Right ventricle myocardium superior (tissue), 1 donor: ENCODE measurements at regions of chr14 and their contacts with region 1.

Region 1: DNA sequence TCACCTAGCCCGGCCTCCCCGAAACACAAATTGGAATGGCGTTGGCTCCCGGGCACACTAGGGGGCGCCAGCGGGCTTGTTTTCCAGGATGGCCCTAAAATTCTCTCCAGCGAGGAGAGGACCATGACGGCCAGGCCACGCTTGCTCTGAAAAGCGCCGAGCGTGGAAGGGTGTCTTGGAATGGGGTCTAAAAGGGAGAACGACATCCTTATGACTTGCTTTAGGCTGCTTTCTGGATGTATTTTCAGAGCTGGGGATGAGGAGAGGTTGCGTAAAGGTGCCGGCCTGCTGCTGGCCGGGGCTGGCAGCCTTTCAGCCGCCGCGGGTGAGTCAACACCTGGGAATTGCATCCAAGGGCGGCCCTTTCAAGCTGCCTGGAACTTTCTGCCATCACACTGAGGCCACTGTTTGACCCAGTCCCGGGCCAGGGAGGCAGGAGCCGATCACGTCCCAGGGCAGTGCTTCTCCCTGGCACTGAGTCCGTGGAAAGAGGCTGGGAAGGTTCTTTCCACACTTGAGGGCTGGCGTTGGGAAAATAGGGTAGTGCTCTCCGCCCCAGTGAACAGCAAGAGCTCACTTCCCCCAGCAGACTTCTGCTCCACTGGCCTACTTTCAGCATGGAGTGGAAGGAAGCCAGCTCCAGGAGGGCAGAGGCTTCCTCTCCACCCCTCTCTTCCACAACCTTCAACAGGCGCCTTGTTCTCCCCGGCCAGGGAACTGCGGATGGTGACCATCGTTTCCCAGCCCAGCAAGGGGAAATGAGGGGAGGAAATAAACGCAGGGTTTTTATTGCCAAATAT is 216.2 kb downstream of the TTC8 start:
- DNase-seq: peak; percentile 92
- ATAC-seq: peak; percentile 96

Region 2: DNA sequence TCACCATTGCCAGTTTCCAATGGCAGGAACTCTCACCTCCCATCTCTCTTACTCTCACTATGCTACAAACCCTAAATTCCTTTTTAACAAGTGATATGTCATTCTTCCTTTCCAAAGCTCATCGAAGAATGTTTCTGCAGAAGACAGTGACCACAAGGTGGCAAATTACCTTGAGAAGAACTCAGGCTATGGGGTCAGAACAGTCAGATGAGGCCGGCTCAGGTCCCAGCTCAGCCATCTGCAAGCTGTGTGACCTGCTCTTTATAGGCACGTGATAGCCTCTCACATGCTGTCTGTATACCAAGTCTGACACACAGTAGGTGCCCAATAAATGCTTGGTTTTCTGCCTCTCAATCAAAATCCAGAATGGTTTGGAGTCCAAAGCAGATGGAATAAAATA is 295.7 kb after region 1 on chr14:
- intact Hi-C with region 1: no loop called
- DNase-seq: no peak
- ATAC-seq: no peak

Region 3: DNA sequence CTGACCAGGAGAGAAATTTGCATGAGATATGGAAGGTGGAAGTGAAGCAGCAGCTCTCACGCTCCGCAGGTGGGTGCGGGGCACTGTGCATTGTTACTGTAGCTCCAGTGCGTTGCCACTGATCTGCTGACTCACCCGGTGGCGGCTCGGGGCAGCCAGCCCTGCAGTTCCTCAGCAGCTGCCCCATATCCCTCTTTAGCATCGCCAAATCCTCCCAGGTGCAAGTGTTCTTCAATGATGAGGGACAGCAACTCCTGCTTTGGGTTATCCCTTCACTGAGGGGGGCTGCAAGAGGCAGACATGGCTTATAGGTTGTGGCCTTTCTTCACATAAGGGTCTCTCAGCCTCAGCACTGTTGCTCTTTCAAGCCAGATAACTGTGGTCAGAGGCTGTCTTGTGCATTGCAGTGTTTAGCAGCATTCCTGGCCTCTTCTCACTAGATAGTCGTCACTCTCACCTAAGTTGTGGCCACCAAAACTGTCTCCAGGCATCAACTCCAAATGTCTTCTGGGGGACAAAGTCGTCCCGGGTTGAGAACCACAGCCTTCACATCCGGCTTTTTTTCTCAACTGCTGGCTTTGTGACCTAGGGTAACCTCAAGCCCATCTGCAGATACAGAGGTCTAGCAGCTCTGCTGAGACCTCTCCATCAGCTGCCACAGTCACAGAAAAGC is 733.1 kb after region 1 on chr14:
- intact Hi-C with region 1: loop called (anchors 5 kb)
- DNase-seq: peak; percentile 69
- ATAC-seq: peak; percentile 43

Region 4: DNA sequence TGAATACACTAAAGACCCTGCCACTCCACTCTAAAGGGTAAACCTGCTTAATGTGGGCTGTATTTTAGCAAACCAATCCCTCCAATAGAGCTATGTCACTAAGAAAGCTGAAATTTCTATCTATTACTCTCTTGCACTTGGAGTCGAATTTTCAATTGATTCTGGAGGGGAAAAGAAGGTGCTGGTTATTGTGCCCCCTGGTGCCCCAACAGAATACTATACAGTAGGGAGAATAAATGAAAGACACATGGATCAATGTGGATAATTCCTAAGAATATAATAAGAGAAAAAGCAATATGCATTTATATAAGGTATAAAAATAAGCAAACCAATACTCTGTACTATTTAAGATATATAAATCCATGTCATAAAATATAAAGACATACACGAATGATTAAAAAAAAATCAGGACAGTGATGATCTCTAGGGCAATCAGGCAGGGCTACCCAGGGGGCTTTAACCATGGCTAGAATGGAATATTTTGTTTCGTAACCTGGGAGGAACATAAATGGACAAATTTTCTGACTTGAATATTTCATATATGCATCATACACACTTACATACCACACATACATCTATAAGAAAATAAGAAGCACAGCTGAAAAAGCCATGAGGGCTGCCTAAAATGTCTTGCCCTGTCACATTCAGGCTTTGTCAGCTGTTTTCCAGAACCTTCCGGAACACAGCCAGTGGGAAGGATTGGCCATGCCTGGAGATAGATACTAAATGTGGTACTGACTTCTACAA is 859.4 kb after region 1 on chr14:
- intact Hi-C with region 1: loop called (anchors 2 kb)
- DNase-seq: no peak
- ATAC-seq: peak; percentile 71